ENCODE measurements at regions of chr11 and their contacts with region 1.

Region 1: GRCh38 chr11:120335908-120336640 is at the start of gene ARHGEF12:
- DNase-seq: peak; percentile 95
- H3K4me3 Mint-ChIP-seq: peak within 1 kb of the TSS; percentile 94
- H3K27ac Mint-ChIP-seq: peak within 1 kb of the TSS; percentile 88
- H3K4me1 Mint-ChIP-seq: peaks cover 52% of the 10 kb centered on the region
- H3K27me3 Mint-ChIP-seq: no peaks in the 10 kb centered on the region
- CTCF ChIP-seq: no peak
- total RNA-seq, gene ARHGEF12: 61.2 and 62.8 TPM in 2 replicates

Region 2: GRCh38 chr11:120385110-120385509 is 49.0 kb after region 1 on chr11:
- CTCF ChIA-PET with region 1: interaction called, 5 read pairs
- POLR2A ChIA-PET with region 1: interaction called, 16 read pairs
- intact Hi-C with region 1: no loop called
- DNase-seq: no peak
- H3K4me3 Mint-ChIP-seq: no peak overlapping the region
- H3K27ac Mint-ChIP-seq: no peak overlapping the region
- H3K4me1 Mint-ChIP-seq: peaks cover 27% of the 10 kb centered on the region
- H3K27me3 Mint-ChIP-seq: no peaks in the 10 kb centered on the region
- CTCF ChIP-seq: no peak

Region 3: DNA sequence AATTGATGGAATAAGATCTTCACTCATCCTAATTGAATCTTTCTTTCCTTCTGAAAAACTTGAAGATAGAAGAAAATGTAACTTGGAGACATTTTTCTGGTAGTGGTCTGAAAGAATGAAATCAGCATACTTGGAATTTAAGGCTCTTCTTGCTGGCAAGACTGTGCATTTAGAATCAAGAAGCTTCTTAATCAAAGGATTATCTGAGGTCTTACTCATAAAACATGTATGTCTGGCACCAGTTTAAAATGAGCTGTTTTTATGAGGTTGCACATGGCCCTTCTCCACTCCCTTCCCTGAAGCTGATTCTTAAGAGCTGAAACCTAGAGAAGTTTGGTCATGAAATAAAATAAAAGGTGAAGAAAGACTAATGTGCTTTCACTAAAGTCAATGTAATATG is 77.4 kb after region 1 on chr11:
- CTCF ChIA-PET with region 1: interaction called, 5 read pairs
- POLR2A ChIA-PET with region 1: interaction called, 84 read pairs
- intact Hi-C with region 1: no loop called
- DNase-seq: peak; percentile 20
- H3K4me3 Mint-ChIP-seq: peak overlapping the region; percentile 13
- H3K27ac Mint-ChIP-seq: peak overlapping the region; percentile 55
- H3K4me1 Mint-ChIP-seq: peaks cover 21% of the 10 kb centered on the region
- H3K27me3 Mint-ChIP-seq: no peaks in the 10 kb centered on the region
- CTCF ChIP-seq: no peak

Region 4: GRCh38 chr11:120432056-120433018 is 96.3 kb after region 1 on chr11:
- CTCF ChIA-PET with region 1: interaction called, 19 read pairs
- POLR2A ChIA-PET with region 1: interaction called, 93 read pairs
- intact Hi-C with region 1: loop called (anchors 1 kb)
- DNase-seq: peak; percentile 96
- H3K4me3 Mint-ChIP-seq: peak overlapping the region; percentile 65
- H3K27ac Mint-ChIP-seq: peak overlapping the region; percentile 89
- H3K4me1 Mint-ChIP-seq: peaks cover 15% of the 10 kb centered on the region
- H3K27me3 Mint-ChIP-seq: no peaks in the 10 kb centered on the region
- CTCF ChIP-seq: no peak

Region 5: DNA sequence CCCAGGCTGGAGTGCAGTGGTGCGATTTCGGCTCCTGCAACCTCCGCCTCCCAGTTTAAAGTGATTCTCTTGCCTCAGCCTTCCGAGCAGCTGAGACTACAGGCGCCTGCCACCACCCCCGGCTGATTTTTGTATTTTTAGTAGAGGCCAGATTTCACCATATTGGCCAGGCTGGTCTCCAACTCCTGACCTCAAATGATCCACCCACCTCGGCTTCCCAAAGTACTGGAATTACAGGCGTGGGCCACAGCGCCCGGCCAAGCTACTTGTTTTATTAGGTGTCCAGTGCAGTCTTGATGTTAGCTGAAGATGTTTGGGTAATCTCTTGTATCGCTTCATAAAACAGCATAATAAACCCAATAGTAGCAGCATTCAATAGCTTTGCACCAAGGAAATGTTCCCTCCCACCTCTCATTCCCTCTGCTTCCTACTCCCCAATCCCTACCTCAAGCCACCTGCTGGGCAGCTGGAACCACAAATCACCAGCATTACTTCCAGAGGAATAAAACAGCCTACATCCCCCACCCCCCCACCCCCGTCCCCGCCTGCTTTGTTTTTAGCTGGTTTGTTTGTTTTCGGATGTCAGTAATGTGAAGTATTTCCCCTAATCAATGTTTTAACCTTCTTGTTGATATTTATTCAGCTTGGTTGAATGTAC is 164.5 kb after region 1 on chr11:
- CTCF ChIA-PET with region 1: interaction called, 7 read pairs
- POLR2A ChIA-PET with region 1: interaction called, 3 read pairs
- intact Hi-C with region 1: loop called (anchors 5 kb)
- DNase-seq: no peak
- H3K4me3 Mint-ChIP-seq: no peak overlapping the region
- H3K27ac Mint-ChIP-seq: no peak overlapping the region
- H3K4me1 Mint-ChIP-seq: no peaks in the 10 kb centered on the region
- H3K27me3 Mint-ChIP-seq: peaks cover 18% of the 10 kb centered on the region
- CTCF ChIP-seq: no peak

Region 6: GRCh38 chr11:121104312-121104762 is 768.3 kb after region 1 on chr11:
- CTCF ChIA-PET with region 1: interaction called, 10 read pairs
- POLR2A ChIA-PET with region 1: no interaction called
- intact Hi-C with region 1: no loop called
- DNase-seq: no peak
- H3K4me3 Mint-ChIP-seq: no peak overlapping the region
- H3K27ac Mint-ChIP-seq: no peak overlapping the region
- H3K4me1 Mint-ChIP-seq: no peaks in the 10 kb centered on the region
- H3K27me3 Mint-ChIP-seq: peaks cover 23% of the 10 kb centered on the region
- CTCF ChIP-seq: no peak